ENCODE measurements at regions of chr10 and their contacts with region 1.

Region 1: GRCh38 chr10:43671656-43672531 is 23.2 kb upstream of the ZNF32 start:
- DNase-seq: peak; percentile 78
- H3K4me3 ChIP-seq: no peak overlapping the region
- H3K27ac ChIP-seq: no peak overlapping the region
- H3K4me1 ChIP-seq: no peaks in the 10 kb centered on the region; a peak in 1 of 4 replicates
- H3K27me3 ChIP-seq: no peaks in the 10 kb centered on the region; the same call in 1 of the 2 replicates
- CTCF ChIP-seq: peak; percentile 81
- EP300 ChIP-seq: no peak
- RAD21 ChIP-seq: peak; percentile 97

Region 2: DNA sequence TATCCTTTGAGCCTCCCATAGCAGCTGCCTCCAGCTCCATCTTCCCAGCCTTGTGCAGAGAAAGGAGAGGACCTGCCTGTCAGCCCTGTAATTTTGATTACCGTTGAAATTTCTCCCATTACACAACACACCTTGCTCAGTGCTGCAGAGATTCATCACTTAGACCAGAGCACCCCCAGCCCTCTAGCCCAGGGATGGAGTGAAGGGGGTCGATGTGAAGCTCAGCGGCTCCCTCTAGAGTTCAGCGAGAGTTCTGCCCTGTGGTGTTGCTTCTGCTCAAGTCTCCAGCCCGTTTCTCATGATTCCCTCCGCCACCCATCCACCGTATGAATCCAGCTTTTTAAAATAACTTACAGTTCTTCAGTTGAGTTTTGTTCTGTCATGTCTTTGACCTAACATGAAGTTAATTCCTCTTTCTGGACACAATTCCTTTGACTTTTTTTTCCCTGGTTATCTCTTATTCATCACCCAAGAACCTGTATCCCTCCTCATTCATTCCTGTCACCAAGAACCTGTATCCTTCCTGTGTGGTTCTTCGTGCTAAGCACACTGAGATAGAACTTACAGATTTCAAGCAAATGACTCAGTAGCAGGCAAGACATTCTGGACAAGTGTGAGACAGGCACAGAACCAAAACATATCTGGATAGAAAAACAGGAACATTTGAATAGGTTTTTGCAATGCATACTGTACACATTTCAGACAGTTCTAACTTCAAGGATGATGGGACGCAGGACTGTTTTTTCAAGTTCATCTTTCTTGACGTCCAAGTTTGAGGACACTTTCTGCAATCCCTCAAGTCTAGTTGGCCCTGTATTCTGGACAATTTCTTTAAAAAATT is 11.8 kb after region 1 on chr10:
- CTCF ChIA-PET with region 1: interaction called, 32 read pairs
- POLR2A ChIA-PET with region 1: no interaction called
- DNase-seq: peak; percentile 58
- H3K4me3 ChIP-seq: no peak overlapping the region
- H3K27ac ChIP-seq: no peak overlapping the region
- H3K4me1 ChIP-seq: peaks cover 0 to 4% of the 10 kb centered on the region in 2 experiments; a peak in 1 of 4 replicates
- H3K27me3 ChIP-seq: no peaks in the 10 kb centered on the region
- CTCF ChIP-seq: peak; percentile 46
- EP300 ChIP-seq: no peak
- RAD21 ChIP-seq: 0 out of 2 replicates have a peak, but pooled peaks have one; percentile 26

Region 3: GRCh38 chr10:44386546-44387052 is 714.7 kb after region 1 on chr10:
- CTCF ChIA-PET with region 1: interaction called, 142 read pairs
- POLR2A ChIA-PET with region 1: interaction called, 3 read pairs
- DNase-seq: peak; percentile 95
- H3K4me3 ChIP-seq: peak overlapping the region in 1 of 2 experiments; percentile 49; a peak in 1 of 4 replicates
- H3K27ac ChIP-seq: no peak overlapping the region
- H3K4me1 ChIP-seq: no peaks in the 10 kb centered on the region; a peak in 1 of 4 replicates
- H3K27me3 ChIP-seq: peaks cover 11% of the 10 kb centered on the region; the same call in 1 of the 2 replicates
- CTCF ChIP-seq: peak; percentile 79
- EP300 ChIP-seq: no peak
- RAD21 ChIP-seq: peak; percentile 91

Region 4: GRCh38 chr10:44857363-44858016 is 1185.6 kb after region 1 on chr10:
- CTCF ChIA-PET with region 1: interaction called, 11 read pairs
- POLR2A ChIA-PET with region 1: no interaction called
- DNase-seq: peak; percentile 85
- H3K4me3 ChIP-seq: peak overlapping the region in 1 of 2 experiments; percentile 27; a peak in 1 of 4 replicates
- H3K27ac ChIP-seq: no peak overlapping the region
- H3K4me1 ChIP-seq: peaks cover 0 to 10% of the 10 kb centered on the region in 2 experiments; a peak in 2 of 4 replicates
- H3K27me3 ChIP-seq: no peaks in the 10 kb centered on the region
- CTCF ChIP-seq: peak; percentile 99
- EP300 ChIP-seq: no peak
- RAD21 ChIP-seq: peak; percentile 81